Esophagus squamous epithelium (tissue), 5 donors: ENCODE measurements at regions of chr20 and their contacts with region 1.

Region 1: DNA sequence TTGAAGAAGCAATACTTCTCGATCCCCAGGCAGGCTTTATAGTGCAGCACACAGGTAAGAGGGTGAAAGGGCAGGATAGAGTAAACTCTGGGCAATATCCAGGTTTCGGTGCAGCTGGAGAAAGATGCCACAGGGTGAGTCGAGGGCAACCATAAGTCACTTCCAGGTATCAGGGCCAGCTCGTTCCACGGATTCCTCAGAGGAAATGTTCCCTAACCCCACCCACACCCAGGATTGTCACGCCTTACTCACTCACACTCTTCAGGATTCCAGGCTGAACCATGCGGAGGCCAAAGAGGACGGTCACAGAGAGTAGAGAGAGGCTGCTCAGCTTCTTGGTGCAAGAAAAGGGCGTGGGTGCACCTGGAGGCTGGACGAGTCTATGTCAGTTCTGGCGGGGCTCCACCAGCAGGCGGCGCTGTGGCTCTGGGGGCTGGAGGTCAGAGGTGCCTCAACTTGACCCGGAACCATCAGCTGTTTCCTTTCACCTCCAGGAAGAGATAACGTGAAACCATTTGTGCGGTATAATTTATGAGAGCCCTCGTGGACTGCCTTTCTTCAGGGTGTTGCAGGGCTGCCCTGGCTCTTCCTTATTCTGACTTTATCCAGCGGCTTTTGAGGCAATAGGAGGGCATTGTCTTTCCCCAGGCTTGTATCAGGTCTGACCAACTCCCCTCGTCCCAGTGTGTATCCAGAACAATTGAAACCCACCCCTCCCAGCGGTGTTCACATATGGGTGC is 14.5 kb upstream of the WFDC12 start:
- DNase-seq: no peak
- H3K4me3 ChIP-seq: no peak overlapping the region
- H3K27ac ChIP-seq: no peak overlapping the region
- H3K4me1 ChIP-seq: peaks cover 0 to 14% (median 0%) of the 10 kb centered on the region in 3 donors
- H3K27me3 ChIP-seq: peaks cover 0 to 21% (median 0%) of the 10 kb centered on the region in 4 donors
- CTCF ChIP-seq: peak; percentile 32 to 92 (median 76)
- POLR2A ChIP-seq: no peak

Region 2: DNA sequence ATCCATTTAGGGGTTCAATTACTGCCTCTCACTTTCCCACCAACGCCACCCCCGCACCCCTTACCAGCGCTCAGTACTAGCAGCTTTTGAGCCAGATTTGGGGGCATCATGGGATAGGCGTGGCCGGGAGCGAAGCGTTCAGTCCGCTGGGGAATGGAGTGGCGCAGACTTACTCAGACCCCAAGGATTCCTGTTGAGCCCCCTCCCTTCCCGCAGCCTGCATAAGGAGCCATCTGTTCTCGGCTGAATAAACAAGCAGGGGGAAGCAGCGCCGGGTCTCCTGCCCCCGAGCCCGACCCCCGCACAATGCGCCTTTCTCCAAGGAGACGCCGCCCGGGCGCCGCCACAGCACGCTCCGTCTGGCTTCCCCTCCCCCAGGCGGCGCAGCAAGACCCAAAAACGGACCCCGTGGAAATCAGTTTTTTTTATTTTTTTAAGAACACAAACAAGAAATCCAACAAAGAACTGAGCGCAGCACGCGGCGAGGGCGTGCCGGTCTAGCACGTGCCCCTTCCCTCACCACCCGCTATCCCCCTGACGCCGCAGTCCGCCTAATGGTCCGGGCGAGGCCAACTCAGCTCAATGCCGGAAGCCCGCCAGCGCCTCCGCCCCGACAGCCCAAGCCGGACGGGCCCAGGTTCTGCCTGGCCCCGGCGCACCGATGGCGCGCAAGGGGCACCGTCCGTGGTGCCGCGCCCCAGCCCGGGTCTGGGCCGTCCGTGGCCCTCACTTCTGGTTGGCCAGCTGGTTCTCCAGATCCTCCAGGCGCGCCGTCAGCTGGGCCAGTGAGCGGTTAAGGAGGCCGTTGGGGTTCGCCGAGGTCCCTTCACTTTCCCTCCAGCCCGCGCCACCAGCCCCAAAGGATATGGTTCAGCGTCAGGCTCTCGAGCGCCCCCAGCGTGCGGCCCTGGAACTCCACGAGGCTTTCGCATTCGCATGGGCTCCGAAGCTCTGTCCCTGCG is 154.6 kb after region 1 on chr20:
- intact Hi-C with region 1: loop called (anchors 10 kb)
- DNase-seq: no peak
- H3K4me3 ChIP-seq: peak overlapping the region; percentile 43 to 74 (median 52)
- H3K27ac ChIP-seq: peak overlapping the region; percentile 11 to 69 (median 50)
- H3K4me1 ChIP-seq: peaks cover 5 to 23% (median 6%) of the 10 kb centered on the region in 3 donors
- H3K27me3 ChIP-seq: peaks cover 0 to 65% (median 0%) of the 10 kb centered on the region in 4 donors
- CTCF ChIP-seq: peak; percentile 77 to 95 (median 90)
- POLR2A ChIP-seq: no peak

Region 3: DNA sequence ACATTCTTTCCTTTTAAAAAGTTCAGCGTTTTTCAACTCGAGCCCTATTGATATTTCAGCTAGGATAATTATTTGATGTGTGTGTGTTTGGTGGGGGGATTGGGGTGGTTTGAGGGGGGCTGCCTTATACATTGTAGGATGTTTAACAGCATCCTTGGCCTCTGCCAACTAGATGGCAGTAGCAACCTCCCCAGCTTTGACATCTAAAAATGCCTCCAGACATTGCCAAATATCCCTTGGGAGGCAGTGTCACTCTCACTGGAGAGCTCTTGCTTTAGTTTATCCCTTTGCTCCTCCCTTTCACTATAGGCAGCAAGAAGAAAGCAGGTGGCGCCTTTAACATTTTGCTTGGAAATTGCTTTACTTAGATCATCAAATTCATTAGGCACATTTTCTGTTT is 254.0 kb after region 1 on chr20:
- intact Hi-C with region 1: no loop called
- DNase-seq: no peak
- H3K4me3 ChIP-seq: no peak overlapping the region
- H3K27ac ChIP-seq: no peak overlapping the region
- H3K4me1 ChIP-seq: no peaks in the 10 kb centered on the region
- H3K27me3 ChIP-seq: no peaks in the 10 kb centered on the region
- CTCF ChIP-seq: no peak
- POLR2A ChIP-seq: no peak